CD8-positive, alpha-beta T cell (primary cell): ENCODE measurements at regions of chr9 and their contacts with region 1.

Region 1: GRCh38 chr9:71604197-71605063 is 163.9 kb downstream of the CEMIP2 start:
- DNase-seq: peak; percentile 57 to 88 (median 79)
- ATAC-seq: peak; percentile 66
- H3K4me3 ChIP-seq: no peak overlapping the region
- H3K4me3 Mint-ChIP-seq: no peak overlapping the region
- H3K27ac ChIP-seq: no peak overlapping the region
- H3K27ac Mint-ChIP-seq: no peak overlapping the region
- H3K4me1 ChIP-seq: no peaks in the 10 kb centered on the region
- H3K4me1 Mint-ChIP-seq: no peaks in the 10 kb centered on the region
- H3K27me3 ChIP-seq: no peaks in the 10 kb centered on the region
- H3K27me3 Mint-ChIP-seq: no peaks in the 10 kb centered on the region
- CTCF ChIP-seq: peak; percentile 81

Region 2: DNA sequence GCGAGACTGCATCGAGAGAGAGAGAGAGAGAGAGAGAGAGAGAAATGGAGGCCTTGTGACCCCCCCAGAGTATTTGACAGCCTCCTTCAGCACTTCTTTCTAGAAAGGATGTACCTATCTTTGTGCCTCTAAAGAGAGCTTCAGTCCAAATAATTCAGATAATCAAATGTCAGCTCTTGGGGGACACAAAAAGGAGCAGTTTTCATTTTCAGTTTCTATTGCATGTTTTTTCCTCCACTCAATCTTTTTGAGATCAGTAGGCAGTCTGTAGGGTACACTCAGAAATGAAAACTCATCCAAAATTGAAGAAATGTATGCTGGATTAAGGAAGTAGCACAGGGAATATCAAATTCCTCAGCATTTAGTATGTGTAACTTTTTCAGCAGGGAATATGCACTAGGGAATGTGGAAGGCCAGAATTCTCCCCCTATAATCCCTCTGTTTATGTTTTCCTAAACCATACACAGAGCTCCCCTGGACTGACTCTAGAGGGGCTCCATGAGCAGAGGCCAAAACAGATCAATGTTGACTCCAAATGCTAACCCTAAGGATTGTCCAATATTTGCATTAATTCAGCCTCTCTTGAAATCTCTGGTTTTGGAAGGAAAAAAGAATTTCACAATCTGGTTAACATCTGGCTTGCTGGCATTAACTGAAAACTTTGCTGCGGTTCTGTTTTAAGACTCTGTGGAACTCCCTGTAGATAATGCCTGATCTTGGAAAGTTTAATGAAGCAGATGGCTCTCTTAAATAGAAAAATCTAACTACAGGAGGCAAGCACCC is 86.2 kb before region 1 on chr9:
- CTCF ChIA-PET with region 1: no interaction called
- POLR2A ChIA-PET with region 1: no interaction called
- intact Hi-C with region 1: no loop called
- DNase-seq: no peak
- ATAC-seq: no peak
- H3K4me3 ChIP-seq: no peak overlapping the region
- H3K4me3 Mint-ChIP-seq: no peak overlapping the region
- H3K27ac ChIP-seq: no peak overlapping the region
- H3K27ac Mint-ChIP-seq: no peak overlapping the region
- H3K4me1 ChIP-seq: no peaks in the 10 kb centered on the region
- H3K4me1 Mint-ChIP-seq: no peaks in the 10 kb centered on the region
- H3K27me3 ChIP-seq: peaks cover 0 to 5% of the 10 kb centered on the region in 2 experiments
- H3K27me3 Mint-ChIP-seq: peaks cover 29% of the 10 kb centered on the region
- CTCF ChIP-seq: no peak

Region 3: DNA sequence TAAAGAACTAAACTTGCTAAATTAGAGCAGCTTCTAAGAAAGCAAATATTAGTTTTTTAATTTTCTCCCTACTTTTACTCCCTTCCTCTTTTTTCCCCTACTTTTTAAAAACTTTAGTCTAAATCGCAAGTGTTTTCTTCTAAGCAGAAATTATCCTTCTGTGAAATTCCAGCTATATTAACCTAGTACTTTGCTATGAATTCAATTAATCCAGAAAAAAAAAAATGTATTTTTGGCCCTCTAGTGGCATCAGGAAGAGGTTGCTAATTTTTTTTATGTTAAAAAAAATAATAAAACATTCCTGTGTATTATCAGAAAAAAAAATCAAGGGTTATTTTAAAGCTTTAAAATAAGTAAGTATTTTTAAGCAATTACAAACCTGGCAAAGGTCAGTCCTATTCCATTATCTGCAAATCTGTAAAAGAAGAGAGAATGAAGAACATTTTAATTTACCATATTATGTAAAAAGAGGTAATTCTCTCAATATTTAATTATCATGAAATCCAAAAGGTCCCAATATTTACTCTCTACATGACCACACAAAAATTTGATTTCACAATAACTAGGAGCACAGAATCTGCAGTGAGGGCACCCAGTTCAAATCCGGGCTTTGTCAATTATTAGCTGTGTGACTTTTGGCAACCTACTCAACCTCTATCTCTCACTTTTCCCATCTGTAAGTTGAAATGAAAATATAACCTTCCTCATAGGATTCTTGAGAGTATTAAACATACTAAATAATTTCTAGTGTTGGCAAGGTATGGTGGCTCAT is 111.9 kb after region 1 on chr9:
- CTCF ChIA-PET with region 1: interaction called, 24 read pairs
- POLR2A ChIA-PET with region 1: no interaction called
- intact Hi-C with region 1: loop called in 1 of 2 experiments (anchors 2 kb)
- DNase-seq: no peak
- ATAC-seq: no peak
- H3K4me3 ChIP-seq: no peak overlapping the region
- H3K4me3 Mint-ChIP-seq: no peak overlapping the region
- H3K27ac ChIP-seq: no peak overlapping the region
- H3K27ac Mint-ChIP-seq: no peak overlapping the region
- H3K4me1 ChIP-seq: no peaks in the 10 kb centered on the region
- H3K4me1 Mint-ChIP-seq: peaks cover 10% of the 10 kb centered on the region
- H3K27me3 ChIP-seq: no peaks in the 10 kb centered on the region
- H3K27me3 Mint-ChIP-seq: no peaks in the 10 kb centered on the region
- CTCF ChIP-seq: peak; percentile 77

Region 4: DNA sequence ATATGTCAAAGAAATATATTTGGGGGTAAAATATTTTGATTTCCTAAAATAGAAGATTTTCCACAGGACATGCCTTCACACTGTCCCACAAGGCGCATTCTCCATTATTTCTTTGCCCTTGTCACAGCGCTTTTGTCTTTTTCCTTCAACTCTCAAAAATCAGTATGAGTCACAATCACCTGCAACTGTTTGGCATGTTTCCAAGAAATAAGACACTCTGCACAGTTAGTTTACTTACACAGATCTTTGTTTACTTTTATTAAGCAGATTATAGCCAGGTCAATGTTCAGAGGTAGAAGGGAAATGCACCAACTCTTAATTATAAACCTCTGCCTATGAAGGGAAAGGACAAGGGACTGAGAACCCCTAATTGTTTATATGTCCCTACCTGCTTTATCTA is 154.4 kb after region 1 on chr9:
- CTCF ChIA-PET with region 1: interaction called, 3 read pairs
- POLR2A ChIA-PET with region 1: interaction called, 11 read pairs
- intact Hi-C with region 1: no loop called
- DNase-seq: peak in 1 of 9 experiments; percentile 44
- ATAC-seq: peak; percentile 18
- H3K4me3 ChIP-seq: no peak overlapping the region
- H3K4me3 Mint-ChIP-seq: no peak overlapping the region
- H3K27ac ChIP-seq: no peak overlapping the region
- H3K27ac Mint-ChIP-seq: no peak overlapping the region
- H3K4me1 ChIP-seq: peaks cover 55% of the 10 kb centered on the region
- H3K4me1 Mint-ChIP-seq: peaks cover 85% of the 10 kb centered on the region
- H3K27me3 ChIP-seq: no peaks in the 10 kb centered on the region
- H3K27me3 Mint-ChIP-seq: no peaks in the 10 kb centered on the region
- CTCF ChIP-seq: no peak

Region 5: GRCh38 chr9:71806901-71807307 is 202.5 kb after region 1 on chr9:
- CTCF ChIA-PET with region 1: interaction called, 19 read pairs
- POLR2A ChIA-PET with region 1: no interaction called
- intact Hi-C with region 1: no loop called
- DNase-seq: peak; percentile 12 to 80 (median 62)
- ATAC-seq: peak; percentile 96
- H3K4me3 ChIP-seq: no peak overlapping the region
- H3K4me3 Mint-ChIP-seq: no peak overlapping the region
- H3K27ac ChIP-seq: no peak overlapping the region
- H3K27ac Mint-ChIP-seq: peak overlapping the region; percentile 27
- H3K4me1 ChIP-seq: peaks cover 6% of the 10 kb centered on the region
- H3K4me1 Mint-ChIP-seq: peaks cover 15% of the 10 kb centered on the region
- H3K27me3 ChIP-seq: no peaks in the 10 kb centered on the region
- H3K27me3 Mint-ChIP-seq: no peaks in the 10 kb centered on the region
- CTCF ChIP-seq: peak; percentile 91

Region 6: DNA sequence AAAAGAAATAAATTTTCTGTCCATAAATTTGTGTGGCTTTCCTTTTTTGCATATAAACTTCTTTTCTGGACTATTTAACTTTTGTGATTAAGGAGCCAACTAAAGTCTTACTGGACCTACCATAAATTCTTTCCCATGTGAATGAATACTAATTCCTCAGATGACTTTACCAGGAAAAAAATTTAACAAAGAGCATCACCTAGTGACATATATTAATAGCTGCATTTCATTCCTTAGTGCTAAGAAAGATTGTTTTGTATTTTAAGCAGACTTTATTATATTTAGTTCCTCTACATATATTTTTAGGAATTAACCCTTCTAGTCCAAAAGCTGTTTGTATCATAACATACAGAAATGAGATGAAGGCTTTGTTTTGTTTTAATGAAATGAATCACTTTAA is 371.4 kb after region 1 on chr9:
- CTCF ChIA-PET with region 1: no interaction called
- POLR2A ChIA-PET with region 1: no interaction called
- intact Hi-C with region 1: loop called in 1 of 2 experiments (anchors 2 kb)
- DNase-seq: no peak
- ATAC-seq: no peak
- H3K4me3 ChIP-seq: no peak overlapping the region
- H3K4me3 Mint-ChIP-seq: no peak overlapping the region
- H3K27ac ChIP-seq: no peak overlapping the region
- H3K27ac Mint-ChIP-seq: no peak overlapping the region
- H3K4me1 ChIP-seq: no peaks in the 10 kb centered on the region
- H3K4me1 Mint-ChIP-seq: no peaks in the 10 kb centered on the region
- H3K27me3 ChIP-seq: no peaks in the 10 kb centered on the region
- H3K27me3 Mint-ChIP-seq: no peaks in the 10 kb centered on the region
- CTCF ChIP-seq: no peak

Region 7: GRCh38 chr9:72022841-72023240 is 418.4 kb after region 1 on chr9:
- CTCF ChIA-PET with region 1: interaction called, 40 read pairs
- POLR2A ChIA-PET with region 1: no interaction called
- intact Hi-C with region 1: loop called (anchors 1 to 2 kb)
- DNase-seq: no peak
- ATAC-seq: no peak
- H3K4me3 ChIP-seq: no peak overlapping the region
- H3K4me3 Mint-ChIP-seq: no peak overlapping the region
- H3K27ac ChIP-seq: no peak overlapping the region
- H3K27ac Mint-ChIP-seq: no peak overlapping the region
- H3K4me1 ChIP-seq: no peaks in the 10 kb centered on the region
- H3K4me1 Mint-ChIP-seq: peaks cover 3% of the 10 kb centered on the region
- H3K27me3 ChIP-seq: no peaks in the 10 kb centered on the region
- H3K27me3 Mint-ChIP-seq: no peaks in the 10 kb centered on the region
- CTCF ChIP-seq: no peak